Activated CD8-positive, alpha-beta T cell treated with anti-CD3 and anti-CD28 coated beads for 36 hours (primary cell): ENCODE measurements at regions of chr1 and their contacts with region 1.

Region 1: GRCh38 chr1:40153073-40153770 is 8.0 kb upstream of the RLF start:
- DNase-seq: peak; percentile 52
- ATAC-seq: peak; percentile 82
- H3K4me3 Mint-ChIP-seq: peak overlapping the region; percentile 34
- H3K27ac Mint-ChIP-seq: peak overlapping the region; percentile 28
- H3K4me1 Mint-ChIP-seq: peaks cover 7% of the 10 kb centered on the region
- H3K27me3 Mint-ChIP-seq: no peaks in the 10 kb centered on the region
- CTCF ChIP-seq: peak; percentile 74

Region 2: GRCh38 chr1:40185951-40186864 is 33.0 kb after region 1 on chr1:
- CTCF ChIA-PET with region 1: interaction called, 43 read pairs
- POLR2A ChIA-PET with region 1: no interaction called
- intact Hi-C with region 1: no loop called
- DNase-seq: peak; percentile 86
- ATAC-seq: peak; percentile 95
- H3K4me3 Mint-ChIP-seq: no peak overlapping the region
- H3K27ac Mint-ChIP-seq: peak overlapping the region; percentile 80
- H3K4me1 Mint-ChIP-seq: peaks cover 48% of the 10 kb centered on the region
- H3K27me3 Mint-ChIP-seq: no peaks in the 10 kb centered on the region
- CTCF ChIP-seq: no peak

Region 3: GRCh38 chr1:40241362-40241761 is 88.1 kb after region 1 on chr1:
- CTCF ChIA-PET with region 1: interaction called, 12 read pairs
- POLR2A ChIA-PET with region 1: interaction called, 3 read pairs
- intact Hi-C with region 1: no loop called
- DNase-seq: no peak
- ATAC-seq: peak; percentile 31
- H3K4me3 Mint-ChIP-seq: no peak overlapping the region
- H3K27ac Mint-ChIP-seq: peak overlapping the region; percentile 87
- H3K4me1 Mint-ChIP-seq: peaks cover 39% of the 10 kb centered on the region
- H3K27me3 Mint-ChIP-seq: no peaks in the 10 kb centered on the region
- CTCF ChIP-seq: no peak

Region 4: DNA sequence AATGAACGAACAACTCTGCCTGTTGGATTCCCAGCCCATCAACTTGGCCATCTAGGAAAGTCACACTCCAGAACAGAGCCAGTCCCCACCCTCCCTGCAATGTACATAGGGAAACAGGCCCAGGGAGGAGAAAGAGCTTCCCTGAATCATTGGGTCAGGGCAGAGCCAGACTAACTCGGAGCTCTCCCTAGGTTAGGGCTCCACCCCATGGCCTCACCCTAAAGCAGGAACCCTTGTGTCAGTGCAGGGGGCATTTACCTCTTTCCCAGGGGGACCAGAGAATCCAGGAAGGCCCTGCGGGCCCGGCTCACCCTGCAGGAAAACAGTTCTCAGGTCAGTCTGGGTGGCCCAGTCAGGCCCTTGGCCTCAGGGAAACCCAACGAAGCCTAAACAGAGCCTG is 152.2 kb after region 1 on chr1:
- CTCF ChIA-PET with region 1: interaction called, 12 read pairs
- POLR2A ChIA-PET with region 1: no interaction called
- intact Hi-C with region 1: loop called (anchors 10 kb)
- DNase-seq: peak; percentile 34
- ATAC-seq: peak; percentile 53
- H3K4me3 Mint-ChIP-seq: no peak overlapping the region
- H3K27ac Mint-ChIP-seq: no peak overlapping the region
- H3K4me1 Mint-ChIP-seq: no peaks in the 10 kb centered on the region
- H3K27me3 Mint-ChIP-seq: no peaks in the 10 kb centered on the region
- CTCF ChIP-seq: no peak

Region 5: GRCh38 chr1:40404670-40405462 is 251.6 kb after region 1 on chr1:
- CTCF ChIA-PET with region 1: interaction called, 26 read pairs
- POLR2A ChIA-PET with region 1: interaction called, 3 read pairs
- intact Hi-C with region 1: no loop called
- DNase-seq: peak; percentile 61
- ATAC-seq: peak; percentile 31
- H3K4me3 Mint-ChIP-seq: peak overlapping the region; percentile 46
- H3K27ac Mint-ChIP-seq: peak overlapping the region; percentile 89
- H3K4me1 Mint-ChIP-seq: peaks cover 76% of the 10 kb centered on the region
- H3K27me3 Mint-ChIP-seq: no peaks in the 10 kb centered on the region
- CTCF ChIP-seq: peak; percentile 95